Sigmoid colon (tissue), 7 donors: ENCODE measurements at regions of chr12 and their contacts with region 1.

Region 1: DNA sequence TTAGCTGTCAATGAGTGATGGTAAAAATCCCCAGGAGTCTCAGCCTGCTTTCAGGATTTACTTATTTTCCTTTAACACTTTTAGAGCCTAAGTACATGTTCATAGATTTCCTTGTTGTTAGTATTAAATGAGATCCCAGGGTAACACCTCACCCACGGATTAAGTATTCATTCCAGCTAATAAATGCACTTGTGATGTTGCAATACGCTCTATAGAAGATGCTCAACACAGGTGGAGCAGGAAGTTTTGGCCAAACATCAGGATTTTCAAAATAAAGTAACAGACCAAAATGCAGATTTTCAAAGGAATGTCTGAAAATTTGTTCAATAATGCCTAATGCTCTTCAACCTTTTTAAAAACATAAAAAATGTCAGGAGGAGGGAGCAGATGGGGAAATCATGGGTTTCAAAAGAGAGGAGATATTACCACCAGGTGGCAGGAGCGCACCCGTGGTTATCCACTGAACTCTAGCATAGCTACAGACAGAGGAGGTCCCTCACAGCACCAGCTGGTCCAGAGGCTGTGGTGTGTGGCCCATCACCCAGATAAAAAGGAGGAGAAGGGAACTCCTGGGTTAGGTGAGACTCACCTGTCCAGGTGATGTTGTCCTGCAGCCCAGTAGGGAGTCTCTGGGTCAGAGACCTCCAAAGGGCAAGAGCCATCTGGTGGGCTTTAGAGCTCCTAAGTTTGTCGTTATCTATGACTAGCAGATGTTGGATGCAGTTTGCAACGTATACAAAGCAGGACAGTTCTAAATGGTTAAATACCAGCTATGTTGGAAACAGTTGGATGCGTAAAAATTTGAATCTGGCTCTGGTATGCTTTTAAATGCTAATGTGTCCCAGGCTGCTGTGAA is 1158.4 kb upstream of the TMEM132C start:
- DNase-seq: no peak
- H3K4me3 ChIP-seq: no peak overlapping the region
- H3K27ac ChIP-seq: no peak overlapping the region
- H3K4me1 ChIP-seq: no peaks in the 10 kb centered on the region
- H3K27me3 ChIP-seq: no peaks in the 10 kb centered on the region
- CTCF ChIP-seq: peak in 3 of 4 experiments; percentile 37 to 59 (median 46)
- EP300 ChIP-seq: no peak
- POLR2A ChIP-seq: no peak

Region 2: DNA sequence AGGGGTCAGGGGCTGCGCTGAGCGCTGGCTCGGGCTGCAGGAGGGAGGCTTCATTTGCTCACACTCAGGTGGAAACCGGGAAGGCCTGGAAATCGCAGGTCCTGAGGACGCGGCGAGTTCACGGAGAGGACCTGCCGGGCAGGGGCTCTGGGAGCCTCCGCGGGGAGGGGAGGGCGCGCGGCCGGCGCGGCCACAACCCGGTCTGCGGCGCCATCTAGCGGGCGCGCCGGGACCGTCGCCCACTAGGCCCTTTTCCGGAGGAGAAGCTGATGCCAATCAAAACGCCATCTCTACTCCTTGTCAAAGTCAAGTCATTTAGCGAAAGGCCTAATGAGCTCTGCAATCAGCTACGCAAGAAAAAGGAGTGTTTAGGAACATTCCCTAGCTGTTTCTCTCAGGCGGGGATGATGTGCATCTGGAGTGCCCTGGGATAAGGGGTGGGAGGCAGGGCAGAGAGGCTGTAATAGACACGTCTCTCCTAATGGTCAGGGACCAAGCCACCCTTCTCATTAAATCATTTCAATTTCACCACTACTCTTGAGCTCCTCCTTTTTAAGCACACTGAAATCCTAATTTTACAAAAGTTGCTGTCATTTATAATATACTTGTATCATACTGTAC is 272.6 kb after region 1 on chr12:
- intact Hi-C with region 1: loop called (anchors 2 kb)
- DNase-seq: no peak
- H3K4me3 ChIP-seq: peak overlapping the region in 2 of 4 donors; percentile 17 to 30
- H3K27ac ChIP-seq: no peak overlapping the region
- H3K4me1 ChIP-seq: peaks cover 0 to 6% (median 4%) of the 10 kb centered on the region in 4 donors
- H3K27me3 ChIP-seq: peaks cover 0 to 12% (median 0%) of the 10 kb centered on the region in 3 donors
- CTCF ChIP-seq: peak; percentile 41 to 78 (median 54)
- EP300 ChIP-seq: no peak
- POLR2A ChIP-seq: no peak